ENCODE measurements at regions of chr3 and their contacts with region 1.

Region 1: GRCh38 chr3:100047455-100048141 is 66.7 kb downstream of the FILIP1L start:
- DNase-seq: no peak
- ATAC-seq: peak; percentile 27 to 62 (median 40)
- H3K4me3 ChIP-seq: peak overlapping the region in 1 of 12 donors; percentile 18
- H3K27ac ChIP-seq: peak overlapping the region; percentile 10 to 92 (median 76)
- H3K4me1 ChIP-seq: peaks cover 2 to 62% (median 33%) of the 10 kb centered on the region in 12 donors
- H3K27me3 ChIP-seq: no peaks in the 10 kb centered on the region
- CTCF ChIP-seq: no peak
- POLR2A ChIP-seq: no peak

Region 2: GRCh38 chr3:99920481-99921376 is 126.9 kb before region 1 on chr3:
- intact Hi-C with region 1: loop called in 4 of 10 experiments (anchors 5 to 10 kb)
- DNase-seq: peak; percentile 70 to 86 (median 82)
- ATAC-seq: peak; percentile 59 to 88 (median 72)
- H3K4me3 ChIP-seq: no peak overlapping the region
- H3K27ac ChIP-seq: peak overlapping the region; percentile 54 to 88 (median 78)
- H3K4me1 ChIP-seq: peaks cover 0 to 52% (median 36%) of the 10 kb centered on the region in 12 donors
- H3K27me3 ChIP-seq: no peaks in the 10 kb centered on the region
- CTCF ChIP-seq: no peak
- POLR2A ChIP-seq: no peak

Region 3: DNA sequence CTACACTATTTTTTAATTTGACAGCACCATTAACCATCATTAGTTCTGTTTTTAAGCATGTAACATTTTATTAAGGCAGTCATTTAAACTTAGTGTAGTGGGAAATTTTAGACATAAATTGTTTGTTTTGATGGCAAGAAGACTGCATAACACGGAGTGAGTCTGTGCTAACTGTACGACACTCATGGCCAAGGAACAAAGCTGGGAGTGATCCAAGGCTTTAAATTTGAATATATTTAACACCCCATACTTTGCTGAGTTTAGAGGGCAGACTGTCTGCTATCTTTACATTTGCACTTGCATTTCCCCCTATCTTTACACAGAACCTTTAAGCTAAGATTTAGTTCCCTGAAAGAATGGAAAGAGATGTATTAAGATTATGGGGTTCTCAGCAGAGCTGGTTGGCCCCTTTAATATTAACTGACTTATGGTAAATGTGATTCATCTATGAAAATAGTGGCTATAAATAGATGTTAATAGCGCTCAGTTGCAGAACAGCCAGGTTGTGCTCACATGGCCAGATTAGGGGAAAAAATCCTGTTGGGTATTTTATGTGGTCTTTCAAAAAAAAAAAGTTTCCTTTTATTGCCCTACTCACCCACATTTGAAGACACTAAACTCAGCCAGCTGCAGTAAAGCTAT is 109.2 kb before region 1 on chr3:
- intact Hi-C with region 1: loop called in 1 of 10 experiments (anchors 5 kb)
- DNase-seq: no peak
- ATAC-seq: no peak
- H3K4me3 ChIP-seq: no peak overlapping the region
- H3K27ac ChIP-seq: peak overlapping the region in 7 of 12 donors; percentile 4 to 77 (median 58)
- H3K4me1 ChIP-seq: peaks cover 4 to 52% (median 43%) of the 10 kb centered on the region in 12 donors
- H3K27me3 ChIP-seq: no peaks in the 10 kb centered on the region
- CTCF ChIP-seq: no peak
- POLR2A ChIP-seq: no peak

Region 4: GRCh38 chr3:99952306-99952705 is 95.3 kb before region 1 on chr3:
- intact Hi-C with region 1: loop called in 1 of 10 experiments (anchors 10 kb)
- DNase-seq: no peak
- ATAC-seq: no peak
- H3K4me3 ChIP-seq: no peak overlapping the region
- H3K27ac ChIP-seq: no peak overlapping the region
- H3K4me1 ChIP-seq: peaks cover 0 to 44% (median 24%) of the 10 kb centered on the region in 12 donors
- H3K27me3 ChIP-seq: no peaks in the 10 kb centered on the region
- CTCF ChIP-seq: no peak
- POLR2A ChIP-seq: no peak

Region 5: DNA sequence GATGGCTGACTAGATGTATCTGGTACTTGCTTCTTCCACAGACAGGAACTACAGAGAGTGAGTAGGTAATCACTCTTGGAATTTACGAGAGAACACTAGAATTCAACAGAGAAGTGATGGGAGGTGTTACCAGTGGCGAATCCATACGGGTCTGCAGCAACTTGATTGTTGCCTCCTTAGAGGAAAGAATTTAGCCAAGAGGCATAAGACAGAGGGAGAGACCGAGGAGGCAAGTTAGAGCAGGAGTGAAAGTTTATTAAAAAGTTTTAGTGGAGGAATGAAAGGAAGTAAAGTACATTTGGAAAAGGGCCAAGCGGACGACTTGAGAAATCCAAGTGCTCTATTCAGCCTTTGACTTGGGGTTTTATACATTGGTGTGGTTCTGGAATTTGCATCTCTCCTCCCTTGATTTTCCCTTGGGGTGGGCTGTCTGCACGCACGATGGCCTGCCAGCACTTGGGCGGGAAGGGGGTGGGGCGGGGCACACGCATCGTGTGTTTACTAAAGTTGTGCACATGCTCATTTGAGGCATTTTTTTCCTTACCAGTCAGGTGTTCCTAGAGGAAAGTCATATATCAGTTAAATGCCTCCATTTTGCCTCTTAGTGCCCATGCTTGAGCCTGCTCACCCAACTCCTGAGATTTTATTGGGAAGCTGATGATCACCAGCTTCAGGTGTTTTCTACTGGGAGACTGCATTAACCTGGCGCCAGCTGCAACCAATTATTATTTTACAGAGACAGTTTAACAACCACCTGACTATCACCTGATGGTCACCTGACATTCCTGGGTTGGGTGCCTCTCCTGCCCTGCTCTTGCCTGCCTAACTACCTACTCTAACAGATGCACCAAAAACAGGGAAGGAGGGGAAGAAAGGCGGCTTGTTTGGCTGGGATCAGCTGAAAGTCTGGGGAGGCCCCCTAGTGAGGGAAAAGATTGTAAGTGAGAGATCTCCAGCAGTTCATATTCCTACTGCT is 149.6 kb after region 1 on chr3:
- intact Hi-C with region 1: no loop called
- DNase-seq: no peak
- ATAC-seq: no peak
- H3K4me3 ChIP-seq: no peak overlapping the region
- H3K27ac ChIP-seq: no peak overlapping the region
- H3K4me1 ChIP-seq: no peaks in the 10 kb centered on the region
- H3K27me3 ChIP-seq: no peaks in the 10 kb centered on the region
- CTCF ChIP-seq: no peak
- POLR2A ChIP-seq: no peak